BJ (cell line): ENCODE measurements at regions of chr17 and their contacts with region 1.

Region 1: DNA sequence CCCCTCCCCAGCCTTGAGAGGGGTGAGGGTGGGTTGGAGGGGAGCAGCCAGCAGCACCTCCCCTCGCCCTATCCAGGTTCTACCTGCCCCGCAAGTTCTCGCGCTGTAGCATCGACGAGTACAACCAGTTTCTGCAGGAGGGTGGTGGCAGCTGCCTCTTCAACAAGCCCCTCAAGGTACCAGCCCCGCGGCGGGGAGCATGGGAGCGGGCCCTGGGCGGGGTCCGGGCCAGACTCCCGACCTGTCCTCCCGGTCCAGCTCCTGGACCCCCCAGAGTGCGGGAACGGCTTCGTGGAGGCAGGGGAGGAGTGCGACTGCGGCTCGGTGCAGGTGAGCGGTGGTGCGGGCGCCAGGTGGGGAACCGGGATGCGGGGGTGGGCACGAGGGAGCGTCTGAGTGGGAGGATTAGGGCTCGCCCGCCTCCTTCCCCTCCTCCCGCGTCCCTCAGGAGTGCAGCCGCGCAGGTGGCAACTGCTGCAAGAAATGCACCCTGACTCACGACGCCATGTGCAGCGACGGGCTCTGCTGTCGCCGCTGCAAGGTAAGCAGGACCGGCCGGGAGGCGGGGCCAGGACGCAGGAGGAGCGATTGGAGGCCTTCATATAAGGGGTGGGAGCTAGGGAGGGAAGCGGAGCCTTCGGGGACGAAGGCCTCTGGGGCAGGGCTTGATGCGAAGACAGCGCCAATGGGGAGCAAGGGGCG is 16.5 kb downstream of the ADAM11 start:
- DNase-seq: no peak
- H3K4me3 ChIP-seq: peak overlapping the region; percentile 66
- H3K27me3 ChIP-seq: peaks cover 5% of the 10 kb centered on the region; the same call in 1 of the 2 replicates
- CTCF ChIP-seq: no peak

Region 2: DNA sequence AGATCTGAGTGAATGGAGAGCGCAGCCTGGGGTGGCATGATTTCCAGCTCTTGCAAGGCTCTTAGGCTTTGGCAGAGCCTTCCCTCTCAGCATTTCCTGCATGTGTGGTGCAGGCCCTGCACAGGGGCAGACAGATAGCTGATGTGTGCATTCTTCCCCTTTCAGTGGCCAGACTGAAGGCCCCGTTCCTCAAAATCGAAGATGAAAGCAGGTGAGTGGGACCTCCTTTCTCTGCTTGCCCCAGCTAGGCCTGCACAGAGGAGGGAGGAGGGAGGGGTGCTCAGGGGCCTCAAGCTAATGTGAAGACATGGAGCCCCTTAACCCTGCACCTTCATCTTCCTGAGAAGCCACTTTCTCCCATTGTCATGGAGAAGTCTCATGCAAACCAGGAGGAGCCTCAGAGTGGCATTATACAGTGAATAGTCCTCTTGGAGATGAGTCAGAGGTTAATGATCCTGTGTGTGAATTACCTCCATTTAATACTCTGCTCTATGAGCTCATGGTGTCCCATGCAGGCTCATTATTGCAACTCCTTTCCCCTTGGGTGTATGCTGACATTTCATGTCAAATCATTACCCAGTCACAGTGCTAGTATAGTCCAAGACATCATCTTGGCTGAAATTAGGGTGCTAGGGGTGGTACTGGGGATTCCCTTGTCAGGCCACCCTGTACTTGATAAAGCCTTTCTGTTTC is 36.9 kb before region 1 on chr17:
- CTCF ChIA-PET with region 1: interaction called, 3 read pairs
- POLR2A ChIA-PET with region 1: interaction called, 10 read pairs
- DNase-seq: no peak
- H3K4me3 ChIP-seq: no peak overlapping the region
- H3K27me3 ChIP-seq: no peaks in the 10 kb centered on the region
- CTCF ChIP-seq: no peak

Region 3: DNA sequence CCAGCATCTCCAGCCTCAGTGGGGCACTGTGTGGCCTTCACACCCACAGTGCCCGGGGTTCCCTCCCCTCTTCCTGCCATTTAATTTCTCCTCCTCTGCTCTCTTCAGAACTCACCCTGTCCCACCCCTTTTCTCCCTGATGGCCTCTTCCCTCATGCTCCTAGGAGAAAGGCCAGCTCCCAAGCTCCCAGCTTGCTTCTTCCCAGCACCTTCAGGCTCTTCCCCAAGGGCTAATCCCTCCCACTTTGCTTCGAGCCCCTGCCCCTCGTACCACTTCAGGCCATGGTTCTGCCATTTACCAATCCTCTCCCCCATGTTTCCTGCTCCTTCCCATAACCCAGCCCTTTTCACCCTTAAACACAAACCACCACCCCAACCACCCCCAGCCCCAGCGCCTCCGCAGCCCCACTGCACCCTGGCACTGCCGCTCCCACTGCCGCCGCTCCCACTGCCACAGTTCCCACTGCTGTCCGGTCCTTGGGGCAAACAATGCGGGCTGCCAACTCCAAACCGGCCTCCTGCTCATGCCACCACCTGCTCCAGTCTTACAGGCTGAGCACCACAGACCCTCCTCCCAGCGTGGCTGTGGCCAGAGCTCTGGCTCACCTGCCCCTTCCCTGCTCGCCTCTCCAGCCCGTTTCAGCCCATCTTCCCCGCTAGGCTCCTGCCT is 12.1 kb after region 1 on chr17:
- CTCF ChIA-PET with region 1: interaction called, 24 read pairs
- POLR2A ChIA-PET with region 1: no interaction called
- DNase-seq: no peak
- H3K4me3 ChIP-seq: no peak overlapping the region
- H3K27me3 ChIP-seq: no peaks in the 10 kb centered on the region
- CTCF ChIP-seq: no peak

Region 4: GRCh38 chr17:44804302-44805089 is 29.2 kb after region 1 on chr17:
- CTCF ChIA-PET with region 1: interaction called, 21 read pairs
- POLR2A ChIA-PET with region 1: no interaction called
- DNase-seq: no peak
- H3K4me3 ChIP-seq: no peak overlapping the region
- H3K27me3 ChIP-seq: no peaks in the 10 kb centered on the region
- CTCF ChIP-seq: no peak

Region 5: GRCh38 chr17:44837243-44837642 is 62.0 kb after region 1 on chr17:
- CTCF ChIA-PET with region 1: interaction called, 34 read pairs
- POLR2A ChIA-PET with region 1: no interaction called
- DNase-seq: no peak
- H3K4me3 ChIP-seq: no peak overlapping the region
- H3K27me3 ChIP-seq: no peaks in the 10 kb centered on the region
- CTCF ChIP-seq: no peak

Region 6: GRCh38 chr17:44864866-44865660 is 89.8 kb after region 1 on chr17:
- CTCF ChIA-PET with region 1: interaction called, 452 read pairs
- POLR2A ChIA-PET with region 1: no interaction called
- DNase-seq: no peak
- H3K4me3 ChIP-seq: no peak overlapping the region
- H3K27me3 ChIP-seq: no peaks in the 10 kb centered on the region
- CTCF ChIP-seq: peak; percentile 87

Region 7: GRCh38 chr17:44892250-44892649 is 117.0 kb after region 1 on chr17:
- CTCF ChIA-PET with region 1: interaction called, 10 read pairs
- POLR2A ChIA-PET with region 1: interaction called, 4 read pairs
- DNase-seq: no peak
- H3K4me3 ChIP-seq: no peak overlapping the region
- H3K27me3 ChIP-seq: no peaks in the 10 kb centered on the region
- CTCF ChIP-seq: no peak